Activated B cell treated with CpG ODN at 0.5 μM for 24 hours (primary cell): ENCODE measurements at regions of chr1 and their contacts with region 1.

Region 1: DNA sequence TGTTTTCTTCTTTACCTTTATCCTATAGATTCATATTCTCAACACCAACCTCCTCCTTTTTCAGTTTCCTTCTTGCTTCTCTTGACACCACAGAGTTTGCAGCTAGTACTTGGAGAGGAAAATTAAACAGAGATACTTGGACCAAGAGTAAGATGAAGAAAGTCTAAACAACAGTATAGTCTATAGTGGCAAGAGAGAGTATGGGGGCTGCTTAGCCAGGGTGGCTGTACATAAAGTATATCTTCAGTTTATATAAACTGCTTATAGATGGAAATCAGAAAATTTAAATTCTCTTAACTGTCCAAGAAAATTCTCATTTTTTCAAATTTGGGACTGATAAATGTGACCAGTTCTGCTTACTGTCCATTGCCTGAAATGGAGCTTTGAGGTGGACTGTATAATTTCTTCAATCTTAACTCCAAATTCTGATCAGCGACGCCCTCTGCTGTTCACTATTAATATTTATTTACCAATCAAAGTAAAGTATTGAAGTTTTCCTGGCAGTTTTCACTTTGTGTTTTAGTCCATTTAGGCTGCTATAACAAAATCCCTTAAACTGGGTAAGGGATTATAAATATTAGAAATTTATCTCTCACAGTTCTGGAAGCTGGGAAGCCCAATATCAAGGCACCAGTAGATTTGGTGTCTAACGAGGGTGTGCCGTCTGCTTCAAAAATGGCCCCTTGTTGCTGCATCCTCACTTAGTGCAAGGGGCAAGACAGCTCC is 14.8 kb upstream of the METTL18 start:
- DNase-seq: no peak
- ATAC-seq: peak; percentile 37
- H3K4me3 Mint-ChIP-seq: no peak overlapping the region
- H3K27ac Mint-ChIP-seq: no peak overlapping the region
- H3K4me1 Mint-ChIP-seq: no peaks in the 10 kb centered on the region
- H3K27me3 Mint-ChIP-seq: no peaks in the 10 kb centered on the region
- CTCF ChIP-seq: peak; percentile 62

Region 2: DNA sequence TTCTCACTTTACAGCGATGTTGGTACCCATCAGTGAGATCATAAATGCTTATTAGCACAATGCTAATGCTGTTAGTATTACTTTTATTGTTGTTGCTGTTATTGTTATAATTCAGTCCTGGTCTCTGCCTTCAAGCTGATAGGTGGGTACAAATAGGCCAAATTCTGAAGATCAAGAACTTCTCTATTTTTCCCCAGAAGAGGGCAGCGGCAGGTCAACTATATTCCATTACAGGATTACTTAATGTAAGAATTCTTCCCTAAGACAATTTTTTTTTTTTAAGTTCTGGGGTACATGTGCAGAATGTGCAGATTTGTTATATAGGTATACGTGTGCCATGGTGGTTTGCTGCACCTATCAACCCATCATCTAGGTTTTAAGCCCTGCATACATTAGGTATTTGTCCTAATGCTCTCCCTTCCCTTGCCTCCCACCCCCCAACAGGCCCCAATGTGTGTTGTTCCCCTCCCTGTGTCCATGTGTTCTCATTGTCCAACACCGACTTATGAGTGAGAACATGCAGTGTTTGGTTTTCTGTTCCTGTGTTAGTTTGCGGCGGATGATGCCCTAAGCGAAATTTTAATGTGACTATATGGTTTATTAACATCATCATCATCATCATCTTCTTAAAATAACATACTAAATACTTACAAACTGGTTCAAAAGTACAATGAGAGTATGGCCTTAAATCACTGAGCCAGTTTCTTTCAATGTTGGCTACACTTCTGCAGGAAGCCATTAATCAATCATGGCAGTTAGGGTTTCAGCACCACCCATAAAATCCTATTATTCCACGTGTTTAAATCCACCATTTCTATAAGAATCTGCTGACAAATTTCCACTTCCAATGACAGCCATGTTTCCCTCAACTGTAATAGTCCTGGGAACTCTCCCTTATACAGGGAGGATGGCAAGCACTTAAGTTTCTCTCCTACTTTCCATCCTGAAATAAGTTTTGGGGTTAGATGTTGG is 343.0 kb before region 1 on chr1:
- CTCF ChIA-PET with region 1: interaction called, 4 read pairs
- POLR2A ChIA-PET with region 1: no interaction called
- intact Hi-C with region 1: loop called (anchors 5 kb)
- DNase-seq: no peak
- ATAC-seq: no peak
- H3K4me3 Mint-ChIP-seq: no peak overlapping the region
- H3K27ac Mint-ChIP-seq: no peak overlapping the region
- H3K4me1 Mint-ChIP-seq: no peaks in the 10 kb centered on the region
- H3K27me3 Mint-ChIP-seq: no peaks in the 10 kb centered on the region
- CTCF ChIP-seq: no peak

Region 3: GRCh38 chr1:169546087-169546995 is 263.2 kb before region 1 on chr1:
- CTCF ChIA-PET with region 1: interaction called, 62 read pairs
- POLR2A ChIA-PET with region 1: no interaction called
- intact Hi-C with region 1: loop called (anchors 1 kb)
- DNase-seq: no peak
- ATAC-seq: peak; percentile 78
- H3K4me3 Mint-ChIP-seq: no peak overlapping the region
- H3K27ac Mint-ChIP-seq: no peak overlapping the region
- H3K4me1 Mint-ChIP-seq: no peaks in the 10 kb centered on the region
- H3K27me3 Mint-ChIP-seq: peaks cover 3% of the 10 kb centered on the region
- CTCF ChIP-seq: peak; percentile 73

Region 4: GRCh38 chr1:169586395-169587255 is 222.9 kb before region 1 on chr1 and contains the start of gene F5:
- CTCF ChIA-PET with region 1: interaction called, 32 read pairs
- POLR2A ChIA-PET with region 1: no interaction called
- intact Hi-C with region 1: loop called (anchors 1 kb)
- DNase-seq: peak; percentile 40
- ATAC-seq: peak; percentile 98
- H3K4me3 Mint-ChIP-seq: peak within 1 kb of the TSS; percentile 66
- H3K27ac Mint-ChIP-seq: no peak within 1 kb of the TSS
- H3K4me1 Mint-ChIP-seq: peaks cover 7% of the 10 kb centered on the region
- H3K27me3 Mint-ChIP-seq: peaks cover 18% of the 10 kb centered on the region
- CTCF ChIP-seq: no peak
- total RNA-seq, gene F5: 0.66 and 0.67 TPM in 2 replicates

Region 5: DNA sequence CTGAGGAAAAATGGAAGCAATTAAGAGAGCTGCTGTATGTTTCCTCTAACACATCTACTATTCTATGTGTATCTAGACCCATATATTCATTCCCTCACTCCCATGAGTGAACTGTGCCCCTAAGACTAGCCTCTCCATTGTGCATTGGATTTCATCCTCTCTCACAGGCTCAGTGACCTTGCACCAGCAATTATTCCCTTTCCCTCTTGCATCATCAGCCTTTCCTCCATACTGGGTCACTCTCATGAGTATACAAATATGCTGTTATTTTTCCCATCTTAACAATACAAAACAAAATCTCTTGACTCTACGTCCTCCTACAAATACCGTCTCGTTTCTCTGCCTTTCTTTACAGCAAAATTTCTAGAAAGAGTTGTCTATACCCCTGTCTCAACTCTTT is 14.6 kb after region 1 on chr1:
- CTCF ChIA-PET with region 1: no interaction called
- POLR2A ChIA-PET with region 1: no interaction called
- intact Hi-C with region 1: no loop called
- DNase-seq: no peak
- ATAC-seq: no peak
- H3K4me3 Mint-ChIP-seq: no peak overlapping the region
- H3K27ac Mint-ChIP-seq: no peak overlapping the region
- H3K4me1 Mint-ChIP-seq: no peaks in the 10 kb centered on the region
- H3K27me3 Mint-ChIP-seq: no peaks in the 10 kb centered on the region
- CTCF ChIP-seq: no peak